ENCODE measurements at regions of chr20 and their contacts with region 1.

Region 1: GRCh38 chr20:53611449-53611894 is 17.8 kb upstream of the ZNF217 start:
- DNase-seq: peak; percentile 87
- H3K4me3 ChIP-seq: no peak overlapping the region
- H3K27ac ChIP-seq: peak overlapping the region; percentile 39
- H3K4me1 ChIP-seq: peaks cover 52% of the 10 kb centered on the region
- H3K27me3 ChIP-seq: no peaks in the 10 kb centered on the region
- CTCF ChIP-seq: no peak

Region 2: GRCh38 chr20:53869466-53870258 is 258.2 kb after region 1 on chr20:
- CTCF ChIA-PET with region 1: no interaction called
- POLR2A ChIA-PET with region 1: interaction called, 15 read pairs
- intact Hi-C with region 1: no loop called
- DNase-seq: peak; percentile 84
- H3K4me3 ChIP-seq: no peak overlapping the region
- H3K27ac ChIP-seq: no peak overlapping the region
- H3K4me1 ChIP-seq: peaks cover 72% of the 10 kb centered on the region
- H3K27me3 ChIP-seq: no peaks in the 10 kb centered on the region
- CTCF ChIP-seq: peak; percentile 92

Measured in A673 (cell line).